ENCODE measurements at regions of chr1 and their contacts with region 1.

Region 1: DNA sequence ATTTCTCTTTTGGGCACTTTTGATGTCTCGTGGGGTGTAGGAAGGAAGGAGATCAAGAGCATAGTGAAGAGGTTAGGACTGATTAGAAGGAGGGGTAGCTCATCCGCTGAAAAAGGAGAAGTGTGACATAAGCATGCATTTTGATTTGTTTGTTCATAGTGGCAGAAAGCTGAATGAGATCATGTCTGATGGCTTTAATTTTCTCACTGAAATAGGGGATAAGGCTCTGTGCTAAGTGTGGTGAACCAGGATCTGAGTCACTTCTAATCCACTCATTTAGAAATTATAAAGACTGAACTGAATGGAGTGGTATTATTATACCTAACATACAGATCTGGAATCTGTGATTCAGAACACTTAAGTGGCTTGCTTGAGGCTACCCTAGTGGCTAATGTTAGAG is 344.5 kb downstream of the PDE4B start:
- DNase-seq: no peak
- H3K4me3 Mint-ChIP-seq: no peak overlapping the region
- H3K27ac Mint-ChIP-seq: no peak overlapping the region
- H3K4me1 Mint-ChIP-seq: peaks cover 8% of the 10 kb centered on the region
- H3K27me3 Mint-ChIP-seq: no peaks in the 10 kb centered on the region

Region 2: GRCh38 chr1:65939636-65940035 is 197.6 kb before region 1 on chr1:
- CTCF ChIA-PET with region 1: no interaction called
- intact Hi-C with region 1: no loop called
- DNase-seq: no peak
- H3K4me3 Mint-ChIP-seq: no peak overlapping the region
- H3K27ac Mint-ChIP-seq: no peak overlapping the region
- H3K4me1 Mint-ChIP-seq: no peaks in the 10 kb centered on the region
- H3K27me3 Mint-ChIP-seq: peaks cover 8% of the 10 kb centered on the region

Region 3: DNA sequence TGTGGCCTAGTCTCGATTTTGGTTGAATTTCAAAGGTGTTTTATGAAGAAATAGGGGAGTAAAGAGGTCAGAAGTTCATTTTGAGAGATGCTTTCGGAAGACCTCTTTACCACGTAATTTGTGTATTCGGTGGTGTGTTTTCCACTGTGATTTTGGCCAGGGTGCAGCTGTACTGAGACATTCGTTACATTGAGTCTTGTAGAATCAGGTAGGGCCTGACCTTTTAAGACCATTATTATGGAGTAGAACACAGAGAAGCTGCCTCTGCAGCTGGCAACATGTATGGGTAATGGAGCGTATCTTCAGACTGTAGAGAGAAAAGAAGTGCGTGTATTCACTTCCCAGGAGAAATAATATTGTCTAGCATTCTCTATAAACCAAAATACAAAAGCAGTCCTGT is 18.1 kb before region 1 on chr1:
- CTCF ChIA-PET with region 1: no interaction called
- intact Hi-C with region 1: no loop called
- DNase-seq: no peak
- H3K4me3 Mint-ChIP-seq: no peak overlapping the region
- H3K27ac Mint-ChIP-seq: no peak overlapping the region
- H3K4me1 Mint-ChIP-seq: peaks cover 4% of the 10 kb centered on the region
- H3K27me3 Mint-ChIP-seq: peaks cover 13% of the 10 kb centered on the region

Region 4: GRCh38 chr1:66168948-66169671 is 31.9 kb after region 1 on chr1:
- CTCF ChIA-PET with region 1: no interaction called
- intact Hi-C with region 1: loop called (anchors 1 kb)
- DNase-seq: peak; percentile 7
- H3K4me3 Mint-ChIP-seq: no peak overlapping the region
- H3K27ac Mint-ChIP-seq: no peak overlapping the region
- H3K4me1 Mint-ChIP-seq: peaks cover 14% of the 10 kb centered on the region
- H3K27me3 Mint-ChIP-seq: peaks cover 4% of the 10 kb centered on the region

Region 5: DNA sequence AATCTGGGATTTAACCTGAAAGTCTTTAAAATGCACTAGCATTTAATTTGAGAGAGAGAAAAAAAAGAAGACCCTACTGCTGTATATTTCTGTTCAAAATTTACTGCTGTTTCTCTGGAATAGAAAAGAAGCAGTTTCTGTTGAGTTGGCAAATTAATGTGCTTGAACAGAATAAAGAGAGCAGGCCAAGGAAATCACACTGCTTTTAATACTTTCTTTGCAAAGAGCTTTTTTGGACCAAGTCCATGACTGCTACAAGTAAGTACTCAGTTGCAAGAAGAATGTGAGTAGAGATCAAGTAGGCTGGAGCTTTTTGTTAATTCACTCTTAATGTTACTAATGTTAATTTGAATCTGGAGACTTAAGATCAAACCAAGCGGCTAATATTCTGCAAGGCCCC is 60.5 kb after region 1 on chr1:
- CTCF ChIA-PET with region 1: no interaction called
- intact Hi-C with region 1: no loop called
- DNase-seq: no peak
- H3K4me3 Mint-ChIP-seq: no peak overlapping the region
- H3K27ac Mint-ChIP-seq: no peak overlapping the region
- H3K4me1 Mint-ChIP-seq: no peaks in the 10 kb centered on the region
- H3K27me3 Mint-ChIP-seq: no peaks in the 10 kb centered on the region

Region 6: GRCh38 chr1:66231217-66231616 is 94.0 kb after region 1 on chr1:
- CTCF ChIA-PET with region 1: no interaction called
- intact Hi-C with region 1: loop called (anchors 1 kb)
- DNase-seq: no peak
- H3K4me3 Mint-ChIP-seq: no peak overlapping the region
- H3K27ac Mint-ChIP-seq: peak overlapping the region; percentile 5
- H3K4me1 Mint-ChIP-seq: peaks cover 11% of the 10 kb centered on the region
- H3K27me3 Mint-ChIP-seq: peaks cover 4% of the 10 kb centered on the region

Region 7: DNA sequence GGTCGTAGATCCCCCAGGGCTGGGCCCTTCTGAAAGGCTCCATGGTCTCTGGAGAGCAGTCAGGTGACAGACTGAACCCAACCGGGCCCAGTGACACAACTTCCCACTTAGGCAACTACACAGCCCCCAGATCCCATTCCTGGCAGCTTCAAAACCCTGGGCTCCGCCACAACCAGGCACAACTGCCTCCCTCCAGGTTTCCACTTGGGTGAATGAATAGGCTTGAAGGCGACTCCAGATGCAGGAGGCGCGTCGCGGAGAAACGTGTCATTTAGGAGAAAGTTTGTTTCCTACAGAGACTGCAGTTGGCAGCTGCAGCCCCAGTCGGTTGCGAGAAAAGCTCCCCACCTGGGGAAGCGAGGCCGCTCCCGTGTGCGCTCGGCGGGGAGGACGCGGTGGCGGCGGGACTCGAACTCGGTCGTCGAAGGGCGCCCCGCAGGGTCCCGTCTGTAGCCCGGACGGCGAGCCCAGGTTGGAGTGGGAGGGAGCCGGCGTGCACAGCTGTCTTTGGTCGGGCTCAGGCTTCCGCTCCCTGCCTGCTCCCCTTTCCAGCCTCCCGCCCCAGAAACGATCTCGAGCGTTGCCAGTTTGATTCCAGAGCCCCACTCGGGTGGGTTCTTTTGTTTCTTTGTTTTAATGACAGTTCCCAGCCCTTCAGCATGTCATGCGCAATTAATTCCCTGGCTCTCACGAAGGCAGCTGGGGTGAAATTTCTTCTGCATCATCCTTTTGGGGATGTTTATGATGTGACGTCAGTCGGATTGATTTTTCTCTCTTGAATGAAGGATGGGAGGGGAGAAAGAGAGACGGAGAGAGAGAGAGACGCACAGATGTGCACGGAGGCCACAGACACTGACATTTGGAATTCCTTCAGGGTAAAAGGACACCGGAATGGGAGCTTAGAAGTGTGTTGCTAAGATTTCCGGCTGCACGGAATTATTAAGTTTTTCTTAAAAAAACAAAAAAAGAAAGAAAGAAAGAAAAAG is 395.9 kb after region 1 on chr1:
- CTCF ChIA-PET with region 1: no interaction called
- intact Hi-C with region 1: no loop called
- DNase-seq: peak; percentile 29
- H3K4me3 Mint-ChIP-seq: peak overlapping the region; percentile 78
- H3K27ac Mint-ChIP-seq: no peak overlapping the region
- H3K4me1 Mint-ChIP-seq: peaks cover 9% of the 10 kb centered on the region
- H3K27me3 Mint-ChIP-seq: peaks cover 28% of the 10 kb centered on the region

Measured in activated naive CD4-positive, alpha-beta T cell treated with anti-CD3 and anti-CD28 coated beads for 36 hours (primary cell).